H1 (cell line): ENCODE measurements at regions of chr1 and their contacts with region 1.

Region 1: DNA sequence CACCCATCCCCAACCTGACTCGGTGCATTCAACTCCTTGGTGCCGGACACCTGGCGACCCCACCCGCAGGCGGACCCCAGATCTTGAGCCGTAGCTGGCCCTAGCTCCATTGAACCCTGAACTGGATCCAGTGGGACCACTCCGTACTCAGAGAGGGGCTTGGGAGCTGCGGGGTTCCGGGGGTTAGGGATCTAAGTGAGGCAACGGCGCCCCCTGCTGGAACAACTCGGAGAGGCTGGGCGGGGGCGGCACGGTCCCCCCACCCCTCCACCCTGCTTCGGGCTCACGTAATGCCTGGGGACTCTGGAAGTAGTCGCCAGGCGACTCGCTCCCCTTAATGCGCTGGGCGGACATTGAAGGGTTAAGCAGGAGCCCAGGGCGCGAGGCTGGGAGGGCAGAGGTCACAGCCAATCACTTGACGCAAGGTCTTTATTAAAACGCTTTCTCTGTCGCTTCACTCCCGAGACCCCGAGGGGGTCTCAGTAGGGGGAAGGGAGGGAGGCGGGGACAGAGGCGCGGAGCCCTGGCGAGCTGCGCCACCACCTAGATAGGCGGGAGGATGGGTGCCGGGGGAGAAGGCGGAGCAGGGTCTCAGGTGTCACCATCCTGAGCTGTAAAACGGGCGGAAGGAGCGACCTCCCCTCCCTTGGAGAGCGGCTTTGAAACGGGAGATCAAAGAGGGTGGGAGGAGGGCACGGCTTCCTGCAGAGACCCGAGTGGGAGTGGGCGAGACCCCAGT is 704 bp upstream of the CRABP2 start:
- DNase-seq: peak; percentile 86 to 98
- H3K4me3 ChIP-seq: peak overlapping the region; percentile 50 to 80 (median 70)
- H3K27ac ChIP-seq: peak overlapping the region; percentile 79
- H3K4me1 ChIP-seq: peaks cover 27 to 57% (median 45%) of the 10 kb centered on the region in 4 experiments
- H3K27me3 ChIP-seq: peaks cover 0 to 19% (median 8%) of the 10 kb centered on the region in 4 experiments; a peak in 4 of 7 replicates
- CTCF ChIP-seq: peak; percentile 72 to 86 (median 81)
- EP300 ChIP-seq: peak in 1 of 2 experiments; percentile 51; a peak in 1 of 3 replicates
- POLR2A ChIP-seq: no peak
- RAD21 ChIP-seq: peak; percentile 78 to 88

Region 2: GRCh38 chr1:156641761-156642264 is 64.3 kb before region 1 on chr1 and contains the start of gene BCAN:
- CTCF ChIA-PET with region 1: interaction called, 11 read pairs
- POLR2A ChIA-PET with region 1: interaction called, 13 read pairs
- DNase-seq: peak in 1 of 2 experiments; percentile 80
- H3K4me3 ChIP-seq: peak within 1 kb of the TSS; percentile 26 to 72 (median 53)
- H3K27ac ChIP-seq: no peak within 1 kb of the TSS
- H3K4me1 ChIP-seq: peaks cover 5 to 22% (median 15%) of the 10 kb centered on the region in 4 experiments
- H3K27me3 ChIP-seq: peaks cover 11 to 83% (median 63%) of the 10 kb centered on the region in 4 experiments
- CTCF ChIP-seq: no peak
- EP300 ChIP-seq: no peak
- POLR2A ChIP-seq: no peak
- RAD21 ChIP-seq: no peak
- total RNA-seq, gene BCAN: 3.8 and 4.5 TPM in 2 replicates

Region 3: DNA sequence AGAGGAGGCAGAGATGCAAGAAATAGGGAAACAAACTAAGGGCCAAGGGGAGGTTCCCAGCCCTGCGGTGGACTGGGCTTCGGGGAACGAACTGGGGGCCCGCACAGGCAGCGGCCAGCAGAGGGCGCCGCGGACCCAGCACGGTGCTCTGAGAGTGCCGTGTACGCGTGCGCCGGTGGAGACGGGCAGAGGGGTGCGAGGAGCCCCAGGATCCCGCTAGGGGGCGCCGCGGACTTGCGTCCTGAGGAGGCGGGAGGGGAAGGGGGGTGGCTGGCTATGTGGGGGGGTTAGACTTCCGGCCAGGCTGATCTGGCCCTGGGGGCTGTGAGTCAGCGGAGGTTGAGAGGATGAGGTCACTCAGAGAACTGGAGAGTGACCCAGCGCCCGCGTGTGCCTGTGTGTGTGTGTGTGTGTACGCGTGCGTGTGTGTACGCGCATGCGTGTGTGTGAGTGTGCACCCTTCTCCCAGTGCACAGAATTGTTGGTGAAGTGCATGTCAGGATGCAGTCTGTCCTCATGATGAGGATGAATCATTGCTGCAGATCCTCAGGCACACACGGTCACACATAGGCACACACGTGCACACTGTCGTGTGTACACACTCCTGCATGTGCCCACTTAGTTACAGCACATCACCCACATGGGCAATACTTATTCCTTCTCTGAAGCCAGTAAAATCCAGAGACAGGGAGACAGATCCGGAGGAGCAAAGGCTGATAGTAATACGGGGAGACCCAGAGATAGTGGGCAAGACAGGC is 45.9 kb before region 1 on chr1:
- CTCF ChIA-PET with region 1: interaction called, 4,284 read pairs
- POLR2A ChIA-PET with region 1: interaction called, 22 read pairs
- DNase-seq: peak; percentile 96 to 100
- H3K4me3 ChIP-seq: no peak overlapping the region
- H3K27ac ChIP-seq: peak overlapping the region; percentile 54; the same call in 1 of the 2 replicates
- H3K4me1 ChIP-seq: peaks cover 19 to 49% (median 43%) of the 10 kb centered on the region in 4 experiments
- H3K27me3 ChIP-seq: peaks cover 2 to 44% (median 33%) of the 10 kb centered on the region in 4 experiments
- CTCF ChIP-seq: peak in 2 of 3 experiments; percentile 97 to 99; a peak in 3 of 4 replicates
- EP300 ChIP-seq: peak in 1 of 2 experiments; percentile 71; a peak in 1 of 3 replicates
- POLR2A ChIP-seq: peak in 1 of 2 experiments; percentile 30; a peak in 1 of 3 replicates
- RAD21 ChIP-seq: peak; percentile 87 to 96

Region 4: GRCh38 chr1:156717275-156717805 is 11.3 kb after region 1 on chr1:
- CTCF ChIA-PET with region 1: interaction called, 4,284 read pairs
- POLR2A ChIA-PET with region 1: interaction called, 30 read pairs
- DNase-seq: no peak
- H3K4me3 ChIP-seq: no peak overlapping the region
- H3K27ac ChIP-seq: no peak overlapping the region
- H3K4me1 ChIP-seq: peaks cover 2 to 8% (median 4%) of the 10 kb centered on the region in 4 experiments; a peak in 4 of 7 replicates
- H3K27me3 ChIP-seq: no peaks in the 10 kb centered on the region
- CTCF ChIP-seq: no peak
- EP300 ChIP-seq: no peak
- POLR2A ChIP-seq: no peak
- RAD21 ChIP-seq: no peak

Region 5: DNA sequence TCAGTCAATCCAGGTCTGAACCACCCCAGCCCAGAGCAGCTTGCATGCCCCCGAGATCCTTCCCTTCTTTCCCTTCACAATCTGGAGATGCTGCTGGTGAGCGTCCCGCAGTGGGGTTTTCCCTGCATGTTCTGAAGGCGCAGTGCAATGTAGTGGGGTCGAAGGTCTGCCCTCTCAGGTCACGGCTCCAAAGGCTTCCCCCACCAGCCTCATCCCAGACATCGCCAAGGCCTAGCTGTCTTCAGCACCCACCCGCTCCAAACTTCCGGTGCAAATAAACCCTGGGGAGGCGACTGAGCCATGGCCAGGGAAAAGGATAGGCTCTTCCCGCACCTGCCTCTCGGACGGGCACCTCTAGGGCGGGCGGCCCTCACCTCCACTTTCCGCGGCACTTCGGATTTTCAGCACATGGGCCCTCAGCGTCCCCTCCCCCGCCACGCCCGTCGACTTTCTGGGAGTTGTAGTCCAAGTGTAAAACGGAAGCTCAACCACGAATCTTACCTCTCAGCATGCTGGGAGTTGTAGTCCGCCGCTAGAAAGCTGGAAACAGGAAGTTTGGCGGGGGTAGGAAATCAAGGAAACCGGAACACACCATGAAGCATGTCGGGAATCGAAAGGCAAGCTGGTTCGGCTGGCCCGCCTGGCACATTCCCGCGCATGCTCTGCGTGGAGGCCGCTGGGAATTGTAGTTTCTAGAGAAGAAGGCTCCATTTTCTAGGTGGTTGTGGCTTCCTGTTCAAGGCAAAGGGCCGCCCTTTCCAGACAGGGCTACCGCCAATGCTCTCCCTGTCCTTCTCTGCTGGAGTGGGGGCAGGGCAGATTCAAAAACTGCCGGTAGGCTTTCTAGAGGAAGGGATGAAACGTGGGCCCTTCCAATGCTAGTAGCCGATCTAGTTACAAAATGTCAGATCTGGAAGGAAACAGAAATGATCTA is 34.9 kb after region 1 on chr1 and contains the start of gene MRPL24:
- CTCF ChIA-PET with region 1: interaction called, 4,284 read pairs
- POLR2A ChIA-PET with region 1: interaction called, 48 read pairs
- DNase-seq: peak; percentile 93 to 99
- H3K4me3 ChIP-seq: peak within 1 kb of the TSS; percentile 55 to 95 (median 84)
- H3K27ac ChIP-seq: peak within 1 kb of the TSS; percentile 72
- H3K4me1 ChIP-seq: peaks cover 3 to 16% (median 7%) of the 10 kb centered on the region in 4 experiments; a peak in 6 of 7 replicates
- H3K27me3 ChIP-seq: no peaks in the 10 kb centered on the region
- CTCF ChIP-seq: peak in 1 of 3 experiments; percentile 12; a peak in 1 of 4 replicates
- EP300 ChIP-seq: no peak
- POLR2A ChIP-seq: peak; percentile 58 to 88
- RAD21 ChIP-seq: 0 out of 4 replicates have a peak, but pooled peaks of 1 of the 2 experiments have one; percentile 19
- total RNA-seq, gene MRPL24: 34.4 and 35.2 TPM in 2 replicates